ENCODE measurements at regions of chr4 and their contacts with region 1.

Region 1: DNA sequence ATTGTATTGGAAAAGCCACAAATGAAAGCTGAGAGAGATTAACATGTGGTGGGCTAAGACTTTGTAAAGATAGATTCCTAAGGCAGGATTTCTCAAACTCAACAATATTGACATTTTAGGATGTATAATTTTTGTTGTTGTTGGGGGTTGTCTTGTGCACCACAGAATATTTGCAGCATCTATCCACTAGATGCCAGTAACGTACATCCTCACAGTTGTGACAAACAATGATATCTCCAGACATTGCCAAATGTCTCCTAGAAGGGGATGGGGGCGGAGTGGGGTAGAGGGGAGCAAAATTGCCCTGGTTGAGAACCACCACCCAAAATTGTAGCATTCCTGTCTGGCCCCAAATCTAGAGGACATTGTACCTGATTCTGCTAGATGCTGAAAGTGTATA is 14.7 kb upstream of the CBR4 start:
- DNase-seq: no peak
- ATAC-seq: peak; percentile 44
- H3K4me3 Mint-ChIP-seq: no peak overlapping the region
- H3K27ac Mint-ChIP-seq: no peak overlapping the region
- H3K4me1 Mint-ChIP-seq: no peaks in the 10 kb centered on the region
- H3K27me3 Mint-ChIP-seq: peaks cover 16% of the 10 kb centered on the region

Region 2: GRCh38 chr4:169485791-169486742 is 461.3 kb after region 1 on chr4:
- CTCF ChIA-PET with region 1: interaction called, 3 read pairs
- POLR2A ChIA-PET with region 1: no interaction called
- intact Hi-C with region 1: loop called in 1 of 2 experiments (anchors 1 kb)
- DNase-seq: peak; percentile 53
- ATAC-seq: peak; percentile 49
- H3K4me3 Mint-ChIP-seq: no peak overlapping the region
- H3K27ac Mint-ChIP-seq: no peak overlapping the region
- H3K4me1 Mint-ChIP-seq: no peaks in the 10 kb centered on the region
- H3K27me3 Mint-ChIP-seq: no peaks in the 10 kb centered on the region

Region 3: DNA sequence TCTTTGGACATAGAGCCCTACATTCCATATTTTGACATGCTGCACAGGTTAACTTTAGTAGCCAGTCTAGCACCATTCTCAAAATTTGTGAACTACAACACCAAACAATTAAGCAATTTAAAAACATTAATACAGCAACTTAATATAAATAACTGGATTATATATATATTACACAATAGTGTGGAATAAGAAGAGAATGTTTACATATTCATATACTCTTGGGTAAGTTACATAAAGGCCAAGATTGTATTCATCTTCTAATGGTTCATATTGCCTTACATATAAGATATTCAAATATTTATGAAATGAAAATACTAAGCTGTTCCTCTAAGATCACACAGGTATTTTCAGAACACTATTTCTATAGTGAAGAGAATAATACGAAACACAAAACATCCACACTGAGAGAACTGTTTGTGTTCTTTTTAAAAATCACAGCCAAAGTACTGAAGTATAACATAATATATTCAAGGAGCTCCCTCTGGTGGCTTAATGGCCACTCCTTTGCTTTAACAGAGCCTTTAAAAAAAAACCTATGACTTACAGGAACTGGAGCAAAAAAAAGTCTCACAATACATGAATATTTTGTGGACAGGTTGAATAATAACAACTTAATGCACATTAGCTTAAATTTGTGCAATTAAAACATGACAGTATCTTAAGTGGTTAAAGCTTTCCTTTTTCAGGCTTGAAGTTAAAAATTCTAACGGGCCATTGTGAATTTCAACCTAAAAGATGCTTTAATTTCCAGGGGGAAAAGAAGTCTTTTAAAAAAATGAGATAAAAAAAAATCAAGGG is 541.5 kb after region 1 on chr4:
- CTCF ChIA-PET with region 1: no interaction called
- POLR2A ChIA-PET with region 1: no interaction called
- intact Hi-C with region 1: loop called in 1 of 2 experiments (anchors 5 kb)
- DNase-seq: peak; percentile 35
- ATAC-seq: no peak
- H3K4me3 Mint-ChIP-seq: no peak overlapping the region
- H3K27ac Mint-ChIP-seq: peak overlapping the region; percentile 73
- H3K4me1 Mint-ChIP-seq: peaks cover 5% of the 10 kb centered on the region
- H3K27me3 Mint-ChIP-seq: no peaks in the 10 kb centered on the region

Measured in activated CD4-positive, alpha-beta T cell treated with anti-CD3 and anti-CD28 coated beads for 36 hours (primary cell).